Right ventricle myocardium inferior (tissue), 1 donor: ENCODE measurements at regions of chr10 and their contacts with region 1.

Region 1: DNA sequence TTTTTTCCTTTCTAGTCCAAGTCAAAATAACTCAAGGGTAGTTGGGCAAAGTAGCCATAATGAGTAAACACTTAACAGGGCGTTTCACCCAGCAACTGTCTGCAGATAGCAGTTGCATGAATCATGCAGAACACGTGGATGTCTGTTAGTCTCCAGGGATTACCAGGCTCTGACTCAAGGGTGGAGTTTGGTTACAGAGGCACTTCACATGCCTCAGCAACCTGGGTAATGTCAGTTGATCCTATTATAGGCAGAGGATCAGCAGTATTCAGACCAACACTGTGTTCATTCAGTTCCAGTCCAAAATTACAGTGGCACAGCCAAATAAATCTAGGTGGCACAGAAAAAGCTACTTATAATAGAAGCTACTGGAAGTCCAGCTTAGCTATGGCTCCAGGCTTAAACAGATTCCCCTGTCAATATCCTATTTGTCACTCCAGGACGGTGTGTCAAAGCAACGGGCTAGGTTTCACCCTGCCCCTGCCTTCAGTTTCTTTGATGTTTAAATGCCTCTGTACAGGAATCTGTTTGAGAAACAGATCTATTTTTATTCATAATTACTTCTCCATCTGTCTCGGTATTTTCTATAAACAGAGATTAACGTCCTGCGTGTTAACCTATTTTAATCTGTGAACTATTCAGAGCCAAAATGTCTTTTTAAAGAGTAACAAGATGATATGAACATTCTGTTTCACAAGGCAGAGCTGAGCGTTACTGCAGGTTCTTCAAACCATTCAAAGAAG is 162.7 kb upstream of the AKR1E2 start:
- DNase-seq: no peak
- ATAC-seq: peak; percentile 88

Region 2: DNA sequence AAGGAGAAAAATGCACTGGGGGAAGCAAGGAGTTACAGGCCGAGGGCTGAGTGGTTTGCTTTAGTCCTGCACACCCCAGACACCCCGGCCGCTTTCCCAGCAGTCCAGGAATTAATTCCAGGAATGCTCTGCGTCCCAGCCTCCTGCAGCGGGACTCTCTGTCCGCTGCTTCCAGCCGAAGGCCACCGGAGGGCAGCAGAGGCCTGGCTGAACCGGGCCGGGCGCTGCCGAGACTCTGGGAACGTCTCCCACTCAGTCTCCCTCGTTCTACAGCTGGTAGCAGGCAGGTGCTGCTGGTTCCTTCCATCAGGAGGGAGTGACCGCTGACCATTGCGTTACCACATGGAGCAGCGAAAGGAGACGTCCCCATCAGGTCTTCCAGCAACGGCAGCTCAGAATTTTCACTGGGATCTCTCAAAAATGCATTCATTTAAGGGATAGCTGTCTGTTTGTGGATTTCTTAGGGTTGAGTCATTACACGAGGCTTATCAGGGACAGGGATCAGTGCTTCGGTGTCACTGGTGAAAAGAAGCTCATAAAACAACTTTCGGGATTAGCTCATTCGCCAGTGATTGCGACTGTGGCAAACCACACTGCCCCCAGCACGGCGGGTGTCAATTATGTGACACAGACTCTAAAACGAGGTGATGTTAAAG is 1465.9 kb before region 1 on chr10:
- intact Hi-C with region 1: loop called (anchors 5 kb)
- DNase-seq: peak; percentile 87
- ATAC-seq: peak; percentile 89

Region 3: DNA sequence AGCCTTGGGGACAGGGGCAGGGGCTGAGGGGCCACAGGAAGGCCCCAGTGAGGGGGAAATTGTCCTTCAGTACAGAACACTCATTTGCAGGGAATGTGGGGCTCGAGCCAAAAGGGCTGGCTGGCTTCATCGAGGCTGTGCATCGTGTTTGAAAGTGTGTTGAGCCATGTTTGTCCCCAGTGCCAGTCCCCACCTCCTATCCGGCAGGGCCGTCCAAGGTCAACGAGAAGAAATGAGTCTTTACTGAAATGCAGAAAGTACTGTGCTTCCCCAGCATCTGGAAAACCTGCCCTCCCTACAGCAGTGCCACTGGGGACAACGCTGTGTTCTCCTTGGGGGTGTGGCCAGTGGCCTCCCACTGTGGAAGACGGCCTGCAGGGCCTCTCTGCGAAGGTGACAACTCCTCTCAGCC is 1092.5 kb before region 1 on chr10:
- intact Hi-C with region 1: loop called (anchors 5 kb)
- DNase-seq: no peak
- ATAC-seq: peak; percentile 41

Region 4: DNA sequence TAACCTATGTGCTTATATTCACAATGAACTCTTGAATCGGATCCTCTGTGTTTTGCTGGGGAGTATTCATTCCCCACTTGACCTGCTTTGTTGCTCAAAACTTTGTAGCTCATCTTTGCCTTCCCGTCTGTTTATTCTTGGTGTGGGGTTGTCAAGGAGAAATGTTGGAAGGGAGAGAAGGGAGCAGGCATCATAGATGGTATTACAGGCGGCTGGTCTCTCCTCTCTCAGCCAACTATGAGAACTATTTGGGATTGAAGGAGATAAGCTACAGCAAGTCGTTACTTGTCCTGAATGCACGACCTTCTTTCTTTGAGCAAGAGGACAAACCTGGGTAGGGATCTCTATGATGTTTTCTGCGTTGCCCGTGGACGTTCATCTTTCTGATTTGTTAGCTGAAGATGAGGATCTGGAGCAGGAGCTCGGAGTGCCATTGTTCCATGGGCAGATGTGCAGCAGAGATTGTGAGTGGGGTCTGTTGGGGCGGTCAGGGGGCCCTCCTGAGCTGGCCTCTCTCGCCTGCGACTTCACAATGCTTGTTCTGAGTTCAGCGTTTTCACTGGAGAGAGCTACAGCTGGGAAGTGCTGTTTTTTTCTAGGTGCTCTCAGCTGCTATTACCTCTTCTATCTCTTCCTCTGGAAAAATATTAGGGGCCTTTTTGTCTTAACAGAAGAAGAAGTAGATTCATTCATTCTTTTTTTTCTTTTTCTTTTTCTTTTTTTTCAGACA is 751.5 kb before region 1 on chr10:
- intact Hi-C with region 1: loop called (anchors 5 kb)
- DNase-seq: no peak
- ATAC-seq: peak; percentile 88

Region 5: GRCh38 chr10:4241724-4242345 is 421.5 kb before region 1 on chr10:
- intact Hi-C with region 1: loop called (anchors 1 kb)
- DNase-seq: no peak
- ATAC-seq: peak; percentile 89

Region 6: DNA sequence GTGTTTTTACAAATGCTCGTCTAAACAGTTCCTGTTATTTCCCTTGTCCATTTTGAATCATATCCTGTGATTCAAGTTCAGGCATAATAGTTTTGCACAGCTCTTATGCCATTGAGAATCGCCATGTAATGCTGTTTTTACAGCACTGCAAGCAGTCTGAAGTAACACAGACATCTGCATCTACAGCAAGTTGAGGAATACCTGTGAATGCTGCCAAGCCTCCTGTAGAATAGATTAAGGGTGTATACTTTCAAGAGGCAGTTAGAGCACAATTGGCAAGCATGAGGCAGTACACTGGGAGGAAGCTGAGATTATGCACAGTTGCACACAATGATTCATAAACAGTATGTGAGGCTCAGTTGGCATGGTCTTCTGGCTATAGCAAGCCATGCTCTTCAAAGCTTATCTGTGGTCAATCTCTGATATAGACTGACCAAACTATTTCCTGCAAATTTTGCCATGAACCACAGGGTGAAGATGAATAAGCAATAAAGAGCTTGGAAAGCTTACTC is 40.8 kb after region 1 on chr10:
- intact Hi-C with region 1: loop called (anchors 1 kb)
- DNase-seq: no peak
- ATAC-seq: peak; percentile 79

Region 7: GRCh38 chr10:4813023-4813422 is 149.7 kb after region 1 on chr10:
- intact Hi-C with region 1: no loop called
- DNase-seq: no peak
- ATAC-seq: no peak

Region 8: GRCh38 chr10:5606864-5607263 is 943.5 kb after region 1 on chr10:
- intact Hi-C with region 1: no loop called
- DNase-seq: no peak
- ATAC-seq: no peak